ENCODE measurements at regions of chr3 and their contacts with region 1.

Region 1: DNA sequence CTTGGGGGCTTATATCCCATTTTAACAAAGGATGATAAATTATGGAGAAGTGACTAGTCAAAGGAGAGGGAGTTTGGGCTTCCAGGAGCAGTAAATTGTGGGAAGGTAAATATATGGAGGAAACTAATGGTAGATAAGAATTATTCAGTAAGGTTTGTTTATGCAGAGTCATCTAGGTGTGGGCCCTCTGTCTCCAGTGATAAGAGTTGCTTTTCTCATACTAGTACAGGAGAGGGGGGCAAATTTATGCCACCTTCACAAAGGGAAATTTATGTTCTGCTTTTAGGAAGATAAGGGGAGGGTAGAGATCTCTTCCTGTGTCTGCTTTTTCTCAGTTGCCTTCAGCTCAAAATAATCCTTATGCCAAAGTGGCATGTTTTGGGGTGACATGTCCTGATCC is 383.7 kb upstream of the PPP2R3A start:
- DNase-seq: peak; percentile 43 to 71 (median 50)
- ATAC-seq: peak; percentile 91
- H3K4me3 ChIP-seq: no peak overlapping the region
- H3K27ac ChIP-seq: peak overlapping the region; percentile 59; the same call in 2 of the 3 replicates
- H3K4me1 ChIP-seq: peaks cover 0 to 11% of the 10 kb centered on the region in 2 experiments; a peak in 3 of 5 replicates
- H3K27me3 ChIP-seq: no peaks in the 10 kb centered on the region
- CTCF ChIP-seq: no peak
- EP300 ChIP-seq: peak; percentile 87
- POLR2A ChIP-seq: no peak
- RAD21 ChIP-seq: no peak

Region 2: DNA sequence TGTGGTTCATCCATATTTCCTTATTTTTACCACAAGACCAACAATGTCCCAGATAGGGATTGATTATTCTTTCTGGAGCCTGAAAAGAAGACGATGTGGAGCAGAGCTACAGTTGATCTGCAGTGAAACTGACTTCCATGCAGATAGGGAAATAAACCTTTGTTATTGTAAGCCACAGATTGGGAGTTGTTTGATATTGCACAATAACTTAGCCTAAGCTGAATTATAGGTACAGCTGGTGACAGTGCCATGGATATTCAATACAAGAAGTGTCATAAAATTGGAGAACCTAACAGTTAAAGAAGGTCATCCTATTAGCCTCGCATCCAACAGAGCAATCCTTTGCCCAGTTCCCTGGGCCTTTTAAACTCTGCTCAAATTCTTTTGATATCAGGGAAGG is 16.0 kb after region 1 on chr3:
- CTCF ChIA-PET with region 1: no interaction called
- POLR2A ChIA-PET with region 1: no interaction called
- in situ Hi-C with region 1: no loop called
- intact Hi-C with region 1: loop called (anchors 1 kb)
- DNase-seq: no peak
- ATAC-seq: no peak
- H3K4me3 ChIP-seq: no peak overlapping the region
- H3K27ac ChIP-seq: no peak overlapping the region
- H3K4me1 ChIP-seq: no peaks in the 10 kb centered on the region
- H3K27me3 ChIP-seq: no peaks in the 10 kb centered on the region
- CTCF ChIP-seq: no peak
- EP300 ChIP-seq: no peak
- POLR2A ChIP-seq: no peak
- RAD21 ChIP-seq: no peak

Measured in K562 (cell line).